ENCODE measurements at regions of chr12 and their contacts with region 1.

Region 1: DNA sequence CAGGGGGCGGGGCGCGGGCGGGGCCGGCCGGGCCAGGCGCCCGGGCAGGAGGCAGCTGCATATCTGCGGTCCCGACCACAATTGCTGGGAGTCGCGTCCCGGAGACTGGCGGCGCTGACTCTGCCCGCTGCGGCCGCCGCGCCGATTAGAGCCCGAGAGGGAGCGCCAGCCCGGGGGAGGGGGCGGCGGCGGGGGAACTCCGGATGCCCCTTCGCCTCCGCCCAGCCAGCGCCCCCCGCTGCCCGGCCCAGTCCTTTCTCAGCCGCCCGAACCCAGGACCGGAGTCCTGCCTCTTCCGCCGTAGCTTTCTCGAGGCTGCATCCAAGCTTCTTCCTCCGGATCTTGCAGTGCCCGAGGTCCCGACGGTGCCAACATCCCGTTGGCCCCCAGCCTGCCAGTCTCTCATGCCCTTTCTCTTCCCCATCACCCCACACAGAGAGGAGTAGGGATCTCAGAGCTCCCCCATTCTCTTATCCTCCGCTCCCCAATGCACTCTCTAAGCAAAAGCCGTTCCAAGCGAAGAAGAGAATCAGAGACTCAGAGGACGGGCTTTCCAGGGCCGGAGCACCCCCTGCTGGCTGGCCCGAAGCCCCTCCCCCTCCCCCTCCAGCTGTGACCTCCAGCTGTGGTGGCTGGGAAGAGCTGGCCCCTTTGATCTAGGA is 8.8 kb upstream of the SP7 start:
- DNase-seq: peak; percentile 65 to 96 (median 78)

Region 2: GRCh38 chr12:53321074-53321814 is 23.7 kb before region 1 on chr12 and contains the start of gene AAAS:
- intact Hi-C with region 1: loop called (anchors 1 kb)
- DNase-seq: peak; percentile 90 to 99 (median 95)

Region 3: GRCh38 chr12:53424626-53425514 is 79.9 kb after region 1 on chr12:
- intact Hi-C with region 1: no loop called
- DNase-seq: no peak

Region 4: GRCh38 chr12:53701518-53702260 is 356.7 kb after region 1 on chr12:
- intact Hi-C with region 1: no loop called
- DNase-seq: peak; percentile 77 to 98 (median 88)

Measured in posterior cingulate gyrus (tissue), 11 donors.